Lower leg skin (tissue), 4 donors: ENCODE measurements at regions of chr7 and their contacts with region 1.

Region 1: DNA sequence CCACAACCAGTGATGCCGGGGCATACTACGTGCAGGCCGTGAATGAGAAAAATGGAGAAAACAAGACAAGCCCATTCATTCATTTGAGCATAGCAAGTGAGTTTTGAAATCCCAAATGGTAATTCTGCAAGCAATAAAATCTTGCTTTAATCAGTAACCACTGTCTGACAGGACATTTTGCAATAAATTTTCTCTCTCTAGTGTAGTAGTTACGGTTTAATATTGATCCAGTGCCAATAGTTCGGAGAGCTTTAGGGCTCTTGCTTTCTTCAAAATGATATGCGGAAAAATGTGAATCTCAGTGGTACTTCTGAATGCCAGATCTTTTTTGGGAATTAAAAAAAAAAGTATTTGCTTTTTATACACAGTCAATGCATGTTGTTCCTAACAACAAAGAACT is 520.4 kb downstream of the SDK1 start:
- DNase-seq: no peak
- H3K4me3 ChIP-seq: no peak overlapping the region
- CTCF ChIP-seq: no peak
- POLR2A ChIP-seq: no peak

Region 2: DNA sequence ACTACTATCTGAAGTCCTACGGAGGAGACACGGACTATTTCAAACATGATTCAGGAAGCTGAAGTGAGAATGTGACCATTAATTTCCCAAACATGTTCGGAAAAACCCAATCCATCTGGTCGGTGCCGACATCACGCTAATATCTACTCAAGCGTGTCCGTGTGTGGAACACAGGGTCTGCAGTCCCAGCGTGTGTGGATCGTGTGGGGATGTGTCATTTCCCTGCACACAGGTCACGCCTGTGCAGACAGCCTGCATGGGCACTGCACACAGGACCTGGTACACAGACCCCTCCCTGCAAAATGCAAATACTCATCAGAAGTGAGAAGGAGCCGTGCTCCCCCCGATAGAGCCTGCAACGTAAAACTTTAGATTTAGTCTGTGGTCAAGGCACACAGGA is 835.6 kb before region 1 on chr7:
- intact Hi-C with region 1: loop called (anchors 5 kb)
- DNase-seq: no peak
- H3K4me3 ChIP-seq: no peak overlapping the region
- CTCF ChIP-seq: no peak
- POLR2A ChIP-seq: no peak